AG04449 (cell line): ENCODE measurements at regions of chr5 and their contacts with region 1.

Region 1: GRCh38 chr5:9265441-9266175 is 280.3 kb downstream of the SEMA5A start:
- DNase-seq: peak; percentile 84
- H3K4me3 ChIP-seq: peak overlapping the region; percentile 29
- CTCF ChIP-seq: no peak

Region 2: DNA sequence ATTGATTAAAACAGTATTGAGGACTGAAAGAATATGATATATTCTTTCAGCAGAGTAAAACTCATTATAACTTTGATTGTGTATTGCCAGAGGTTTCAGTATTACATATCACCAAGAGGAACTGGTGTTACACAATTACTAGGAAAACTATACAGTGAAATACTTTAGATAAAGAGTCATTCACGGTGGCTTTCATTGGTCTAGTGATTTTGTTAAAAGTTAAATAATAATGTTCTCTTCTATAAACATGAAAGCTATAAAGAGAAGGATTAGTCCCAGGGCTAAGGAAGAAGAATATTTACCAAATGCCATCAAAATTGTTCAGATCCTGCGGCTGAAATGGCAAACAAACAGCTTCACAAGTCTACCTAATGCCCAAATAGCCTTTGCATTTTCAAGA is 26.0 kb before region 1 on chr5:
- CTCF ChIA-PET with region 1: no interaction called
- POLR2A ChIA-PET with region 1: no interaction called
- DNase-seq: no peak
- H3K4me3 ChIP-seq: no peak overlapping the region
- CTCF ChIP-seq: no peak

Region 3: DNA sequence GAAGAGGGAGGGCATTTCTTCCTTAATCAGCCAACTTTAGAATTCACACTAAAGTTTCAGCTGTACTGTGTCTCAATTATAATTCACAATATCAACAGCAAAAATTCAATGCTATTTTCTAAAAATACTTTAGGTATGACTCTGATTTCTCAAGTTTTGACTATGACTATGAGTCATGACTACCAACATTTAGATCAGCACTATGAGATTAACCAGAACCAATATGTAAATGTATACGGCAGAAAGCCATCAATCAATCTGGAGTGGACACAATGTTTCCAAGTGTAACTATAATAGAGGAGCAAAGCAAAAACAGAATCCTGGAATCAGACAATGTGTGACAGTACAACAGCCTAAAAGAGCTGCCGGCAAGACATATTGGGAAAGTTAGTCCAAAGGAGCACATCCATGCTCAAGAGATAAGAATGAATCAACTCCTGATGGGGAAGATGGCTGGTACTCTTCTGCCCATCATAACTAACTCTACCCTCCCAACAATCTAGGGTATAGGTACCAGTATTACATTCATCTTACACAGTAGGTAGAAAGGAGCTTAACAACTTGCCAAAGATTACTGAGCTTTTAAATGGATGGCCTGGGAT is 14.1 kb before region 1 on chr5:
- CTCF ChIA-PET with region 1: interaction called, 11 read pairs
- POLR2A ChIA-PET with region 1: interaction called, 4 read pairs
- DNase-seq: no peak
- H3K4me3 ChIP-seq: no peak overlapping the region
- CTCF ChIP-seq: no peak